HEK293T (cell line): ENCODE measurements at regions of chr3 and their contacts with region 1.

Region 1: DNA sequence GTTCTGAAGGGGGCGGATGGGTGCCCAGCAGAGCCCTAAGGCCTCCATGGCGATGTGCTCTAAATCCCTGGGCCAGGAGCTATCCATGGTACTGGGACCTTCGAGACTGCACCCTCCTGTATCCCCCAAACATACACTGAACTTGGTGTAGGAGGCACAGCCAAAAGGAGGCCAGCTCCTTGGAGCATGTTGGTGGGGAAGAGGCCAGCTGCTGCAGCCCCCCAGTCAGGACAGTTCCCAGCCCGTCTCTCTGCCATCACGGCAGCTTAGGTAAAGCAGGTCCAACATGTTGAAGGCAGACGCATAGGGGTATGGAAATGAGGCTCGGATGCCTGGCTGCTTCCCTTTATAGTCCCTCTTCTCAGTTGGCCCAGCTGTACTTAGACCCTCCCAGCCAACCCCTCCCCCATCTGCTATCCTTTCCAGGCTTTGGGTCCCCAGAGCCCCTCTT is 1.8 kb downstream of the CAMKV start:
- DNase-seq: no peak

Region 2: DNA sequence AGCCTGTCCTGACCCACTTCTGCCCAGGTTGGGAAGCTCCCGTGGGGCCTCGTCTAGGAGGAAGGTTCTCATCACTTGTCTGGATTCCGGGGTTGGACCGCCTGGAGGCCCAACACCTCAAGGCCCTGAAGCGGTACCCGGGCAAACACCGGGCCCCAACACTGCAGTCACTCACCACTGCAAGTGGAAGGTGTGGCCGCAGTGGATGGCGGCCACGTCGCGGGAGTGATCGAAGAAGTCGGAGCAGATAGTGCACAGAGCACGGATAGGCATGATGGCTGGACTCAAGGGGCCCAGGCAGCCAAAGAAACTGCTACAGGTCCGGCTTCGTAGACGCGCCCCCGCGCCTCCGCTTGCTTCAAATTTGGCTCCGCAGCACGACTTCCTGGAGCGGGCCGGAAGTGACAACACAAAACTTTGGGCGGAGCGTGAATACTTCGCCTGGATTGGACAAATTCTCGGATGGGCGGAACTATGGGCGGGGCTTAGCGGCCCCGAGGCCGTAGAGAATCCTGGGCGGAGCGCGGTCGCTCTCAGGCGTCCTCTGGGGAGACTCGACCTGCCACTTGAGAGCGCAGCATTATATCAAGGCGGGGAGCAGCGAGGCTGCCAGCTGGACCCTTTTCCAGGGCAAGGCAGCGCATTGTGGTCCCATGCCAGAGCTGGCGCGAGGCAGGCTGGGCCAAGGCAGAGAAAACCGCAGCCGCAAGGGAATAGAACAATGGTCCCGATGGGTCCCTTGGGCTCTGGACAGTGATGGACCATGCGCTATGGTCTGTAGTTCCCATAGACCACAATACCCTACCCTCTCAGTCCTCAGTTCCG is 11.5 kb before region 1 on chr3 and contains the start of gene TRAIP:
- CTCF ChIA-PET with region 1: no interaction called
- POLR2A ChIA-PET with region 1: interaction called, 41 read pairs
- DNase-seq: peak; percentile 99